Posterior cingulate gyrus (tissue), 11 donors: ENCODE measurements at regions of chr10 and their contacts with region 1.

Region 1: GRCh38 chr10:30727524-30727923 is 98.0 kb upstream of the LYZL2 start:
- DNase-seq: no peak

Region 2: GRCh38 chr10:30783939-30784500 is 56.5 kb after region 1 on chr10:
- intact Hi-C with region 1: no loop called
- DNase-seq: peak; percentile 78 to 98 (median 92)

Region 3: DNA sequence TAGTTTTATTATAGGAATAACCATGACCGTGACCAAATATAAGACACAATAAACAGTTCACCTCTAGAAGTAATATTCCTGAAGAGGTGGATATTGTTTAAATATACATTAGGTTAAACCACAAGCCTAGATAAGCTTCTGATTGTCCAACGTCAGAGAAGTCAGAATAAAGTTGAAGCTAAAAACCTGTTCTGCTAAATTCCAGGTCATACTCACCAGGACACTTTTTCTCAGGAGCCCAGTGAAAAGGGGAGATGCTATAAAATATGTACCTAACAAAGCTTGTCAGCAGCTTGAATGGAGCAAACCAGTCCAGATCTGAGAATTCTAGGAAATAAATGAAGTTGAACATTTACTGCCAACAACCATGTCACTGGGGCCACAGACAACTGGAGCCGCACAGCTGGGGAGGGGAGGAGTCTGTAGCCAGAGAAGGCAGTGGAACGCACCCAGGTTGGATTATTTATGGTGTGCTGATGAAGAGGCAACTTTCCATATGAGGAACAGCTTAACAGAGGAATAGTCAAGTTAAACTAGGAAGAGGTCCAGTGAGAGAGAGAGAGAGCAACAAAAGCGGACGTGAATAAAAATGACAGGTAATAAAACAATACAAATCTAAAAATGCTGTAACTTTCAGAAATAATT is 113.0 kb after region 1 on chr10:
- intact Hi-C with region 1: no loop called
- DNase-seq: no peak

Region 4: DNA sequence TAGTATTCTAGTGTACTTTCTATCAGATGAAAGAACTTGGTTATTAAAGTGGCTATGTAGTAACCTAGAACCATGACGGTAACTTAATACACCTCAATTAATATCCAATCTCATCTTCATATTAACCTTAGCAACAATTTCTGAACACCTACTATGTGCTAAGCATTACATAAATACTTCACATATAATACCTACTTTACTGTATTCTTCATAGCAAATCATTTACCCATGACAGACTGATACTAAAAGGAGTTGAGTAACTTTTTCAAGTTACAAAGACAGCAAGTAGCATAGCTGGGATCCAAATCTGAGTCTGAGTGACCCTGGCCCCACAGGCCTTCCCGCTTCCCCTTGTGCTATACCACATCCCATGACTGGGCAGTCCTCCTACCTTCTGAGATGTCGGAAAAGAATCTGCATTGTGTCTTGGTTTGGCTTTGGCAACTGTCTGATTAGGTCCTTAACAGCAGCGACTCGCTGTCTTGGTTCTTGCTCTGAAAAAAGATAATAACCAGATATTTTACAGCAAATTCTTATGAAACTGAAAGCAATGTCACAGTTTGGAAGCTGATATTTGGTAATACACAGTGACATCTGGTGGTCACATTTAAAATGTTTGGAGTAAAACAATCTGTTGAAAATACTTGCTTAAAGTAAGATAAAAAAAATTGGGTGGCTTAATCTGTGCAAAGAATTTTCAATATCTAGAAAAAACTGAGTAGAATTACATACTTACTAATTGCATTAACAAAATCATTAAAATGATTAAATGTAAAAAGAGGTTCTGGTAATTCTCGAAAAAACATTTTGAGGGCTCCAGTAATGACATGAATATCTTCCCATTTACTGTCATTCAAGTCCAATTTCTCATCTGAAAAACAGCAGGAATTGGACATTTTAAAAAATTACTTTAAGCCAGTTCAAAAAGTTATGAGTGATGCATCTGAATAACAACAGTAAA is 1081.0 kb after region 1 on chr10:
- intact Hi-C with region 1: loop called (anchors 5 kb)
- DNase-seq: peak in 2 of 10 donors; percentile 15 to 82